Ovary (tissue), 10 donors: ENCODE measurements at regions of chr11 and their contacts with region 1.

Region 1: DNA sequence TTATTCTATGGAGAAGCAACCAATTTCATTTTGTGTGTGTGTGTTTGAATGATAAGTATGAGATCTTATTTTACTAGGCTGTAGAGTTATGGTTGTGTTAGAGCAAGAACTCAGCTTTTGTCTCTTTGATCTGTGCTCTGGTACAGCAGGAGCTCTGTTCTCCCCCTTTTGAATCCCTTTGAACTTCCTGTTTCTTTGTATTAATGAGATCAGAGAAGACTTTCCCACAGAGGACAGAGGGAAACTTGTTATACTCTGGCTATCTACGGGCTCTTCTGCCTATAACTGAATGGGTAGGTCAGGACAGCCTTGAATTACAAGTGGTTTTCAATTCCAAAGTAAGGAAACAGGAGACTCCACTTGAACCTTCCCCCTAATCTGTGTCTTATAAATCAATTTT is 1015.0 kb upstream of the RAG2 start:
- DNase-seq: no peak
- H3K4me3 ChIP-seq: no peak overlapping the region
- H3K27ac ChIP-seq: no peak overlapping the region
- H3K4me1 ChIP-seq: no peaks in the 10 kb centered on the region
- H3K27me3 ChIP-seq: no peaks in the 10 kb centered on the region
- CTCF ChIP-seq: no peak
- EP300 ChIP-seq: no peak
- POLR2A ChIP-seq: no peak

Region 2: GRCh38 chr11:37558619-37559200 is 54.3 kb before region 1 on chr11:
- intact Hi-C with region 1: loop called in 1 of 4 experiments (anchors 1 kb)
- DNase-seq: no peak
- H3K4me3 ChIP-seq: no peak overlapping the region
- H3K27ac ChIP-seq: no peak overlapping the region
- H3K4me1 ChIP-seq: no peaks in the 10 kb centered on the region
- H3K27me3 ChIP-seq: no peaks in the 10 kb centered on the region
- CTCF ChIP-seq: no peak
- EP300 ChIP-seq: no peak
- POLR2A ChIP-seq: no peak

Region 3: GRCh38 chr11:37647767-37648166 is 34.7 kb after region 1 on chr11:
- intact Hi-C with region 1: loop called in 1 of 4 experiments (anchors 2 kb)
- DNase-seq: no peak
- H3K4me3 ChIP-seq: no peak overlapping the region
- H3K27ac ChIP-seq: no peak overlapping the region
- H3K4me1 ChIP-seq: no peaks in the 10 kb centered on the region
- H3K27me3 ChIP-seq: no peaks in the 10 kb centered on the region
- CTCF ChIP-seq: no peak
- EP300 ChIP-seq: no peak
- POLR2A ChIP-seq: no peak

Region 4: DNA sequence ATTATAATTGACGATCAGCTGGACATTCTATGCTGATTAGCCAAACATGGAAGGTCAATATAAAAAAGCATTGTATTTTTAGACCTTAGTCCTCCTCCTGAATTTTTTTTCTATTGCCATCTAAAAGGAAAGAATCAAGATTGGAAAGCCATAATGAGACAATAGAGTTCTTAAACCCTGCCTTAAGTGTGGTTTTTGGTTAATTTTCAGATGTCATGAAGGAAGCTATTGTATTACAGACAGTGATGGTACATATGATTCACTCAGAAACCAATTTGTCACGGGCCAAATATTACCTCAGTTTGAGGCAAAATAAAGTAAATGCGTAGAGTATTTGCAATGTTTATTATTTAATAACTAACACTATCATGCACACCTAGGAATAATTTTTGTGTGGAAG is 149.0 kb after region 1 on chr11:
- intact Hi-C with region 1: no loop called
- DNase-seq: no peak
- H3K4me3 ChIP-seq: no peak overlapping the region
- H3K27ac ChIP-seq: no peak overlapping the region
- H3K4me1 ChIP-seq: no peaks in the 10 kb centered on the region
- H3K27me3 ChIP-seq: no peaks in the 10 kb centered on the region
- CTCF ChIP-seq: no peak
- EP300 ChIP-seq: no peak
- POLR2A ChIP-seq: no peak